HAP-1 (cell line): ENCODE measurements at regions of chr12 and their contacts with region 1.

Region 1: GRCh38 chr12:46147144-46147543 is 121.7 kb downstream of the SLC38A1 start:
- DNase-seq: no peak
- H3K4me3 ChIP-seq: no peak overlapping the region
- H3K4me1 ChIP-seq: no peaks in the 10 kb centered on the region
- H3K27me3 ChIP-seq: peaks cover 10% of the 10 kb centered on the region

Region 2: DNA sequence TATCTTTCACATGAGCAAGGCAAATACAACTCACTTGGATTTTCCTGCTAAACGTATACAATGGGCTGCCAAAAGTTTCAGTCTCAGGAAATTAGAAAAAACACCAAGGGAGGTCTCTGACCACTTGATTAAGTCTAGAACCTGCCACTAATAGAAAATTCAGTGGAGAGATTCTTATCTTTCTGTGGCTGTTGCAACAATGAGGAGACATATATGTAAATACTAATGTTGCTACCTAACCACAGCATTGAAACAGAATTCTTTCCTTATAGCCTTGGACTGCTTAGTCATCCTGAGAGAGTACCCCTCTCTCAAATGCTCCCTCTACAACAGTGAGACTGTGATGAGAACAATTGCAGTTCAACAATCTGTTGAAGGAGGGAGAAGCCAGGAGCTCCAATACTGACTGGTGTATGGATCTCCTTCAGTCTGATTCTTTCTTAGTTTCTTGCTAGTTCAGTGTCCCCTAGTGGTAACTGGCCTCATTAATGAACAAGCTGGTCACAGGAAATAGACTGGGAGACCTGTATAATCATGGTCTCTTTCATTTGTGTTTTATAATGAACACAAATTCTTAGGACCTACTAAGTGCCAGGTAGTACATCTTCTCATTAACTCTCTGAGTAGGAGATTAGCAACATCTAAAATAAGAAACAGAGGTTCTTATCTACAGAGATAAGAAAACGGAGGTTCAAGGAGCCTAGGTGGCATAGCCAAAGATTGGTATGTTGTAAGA is 514.1 kb after region 1 on chr12:
- in situ Hi-C with region 1: loop called (anchors 10 kb)
- DNase-seq: peak; percentile 12 to 44
- H3K4me3 ChIP-seq: no peak overlapping the region
- H3K4me1 ChIP-seq: peaks cover 13% of the 10 kb centered on the region
- H3K27me3 ChIP-seq: 0 out of 2 replicates have a peak, but pooled peaks cover 4% of the 10 kb centered on the region